ENCODE measurements at regions of chr9 and their contacts with region 1.

Region 1: DNA sequence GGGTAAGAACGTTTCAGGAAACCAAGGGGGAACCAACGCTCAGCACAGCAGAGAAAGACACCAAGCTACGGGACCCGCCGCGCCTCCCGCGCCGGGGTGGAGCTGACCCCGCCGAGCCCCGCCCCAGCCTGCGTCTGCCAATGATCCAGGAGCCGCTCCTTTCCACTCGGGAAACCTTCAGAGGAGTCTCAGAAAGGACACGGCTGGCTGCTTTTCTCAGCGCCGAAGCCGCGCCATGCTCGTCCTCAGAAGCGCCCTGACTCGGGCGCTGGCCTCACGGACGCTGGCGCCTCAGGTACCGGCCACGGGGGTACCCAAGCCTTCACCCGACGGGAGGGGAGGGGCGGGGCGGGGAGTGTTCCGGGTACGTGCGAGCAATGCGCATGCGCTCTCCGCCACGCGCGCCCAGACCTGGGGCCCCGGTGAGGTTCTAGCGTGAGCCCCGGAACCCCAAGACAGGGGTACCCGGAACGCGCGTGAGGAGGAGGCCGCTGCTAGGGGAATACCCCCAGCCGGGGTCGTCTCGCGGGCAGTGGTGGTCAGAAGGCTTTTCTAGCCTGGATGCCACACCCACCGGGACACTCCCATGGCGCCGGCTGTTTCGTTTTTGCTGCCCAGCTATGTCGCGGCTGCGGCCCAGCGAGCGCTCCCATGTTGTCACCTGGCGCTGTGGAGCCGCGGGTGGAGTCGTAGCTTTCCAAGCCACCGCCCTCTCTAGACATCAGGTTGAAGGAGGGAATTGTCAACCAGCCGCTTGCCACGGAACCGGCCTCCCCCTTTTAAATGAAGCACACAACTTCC is at the start of gene NIPSNAP3A:
- DNase-seq: peak; percentile 92
- ATAC-seq: peak; percentile 93
- H3K4me3 Mint-ChIP-seq: peak within 1 kb of the TSS; percentile 85
- H3K27ac Mint-ChIP-seq: peak within 1 kb of the TSS; percentile 96
- H3K4me1 Mint-ChIP-seq: peaks cover 16% of the 10 kb centered on the region
- H3K27me3 Mint-ChIP-seq: no peaks in the 10 kb centered on the region
- total RNA-seq, gene NIPSNAP3A: 7.2 to 11.7 TPM

Region 2: GRCh38 chr9:103798620-103799019 is 949.1 kb before region 1 on chr9:
- CTCF ChIA-PET with region 1: no interaction called
- POLR2A ChIA-PET with region 1: no interaction called
- intact Hi-C with region 1: loop called in 1 of 2 experiments (anchors 5 kb)
- DNase-seq: peak; percentile 14
- ATAC-seq: peak; percentile 98
- H3K4me3 Mint-ChIP-seq: no peak overlapping the region
- H3K27ac Mint-ChIP-seq: no peak overlapping the region
- H3K4me1 Mint-ChIP-seq: peaks cover 7% of the 10 kb centered on the region
- H3K27me3 Mint-ChIP-seq: peaks cover 4% of the 10 kb centered on the region

Region 3: DNA sequence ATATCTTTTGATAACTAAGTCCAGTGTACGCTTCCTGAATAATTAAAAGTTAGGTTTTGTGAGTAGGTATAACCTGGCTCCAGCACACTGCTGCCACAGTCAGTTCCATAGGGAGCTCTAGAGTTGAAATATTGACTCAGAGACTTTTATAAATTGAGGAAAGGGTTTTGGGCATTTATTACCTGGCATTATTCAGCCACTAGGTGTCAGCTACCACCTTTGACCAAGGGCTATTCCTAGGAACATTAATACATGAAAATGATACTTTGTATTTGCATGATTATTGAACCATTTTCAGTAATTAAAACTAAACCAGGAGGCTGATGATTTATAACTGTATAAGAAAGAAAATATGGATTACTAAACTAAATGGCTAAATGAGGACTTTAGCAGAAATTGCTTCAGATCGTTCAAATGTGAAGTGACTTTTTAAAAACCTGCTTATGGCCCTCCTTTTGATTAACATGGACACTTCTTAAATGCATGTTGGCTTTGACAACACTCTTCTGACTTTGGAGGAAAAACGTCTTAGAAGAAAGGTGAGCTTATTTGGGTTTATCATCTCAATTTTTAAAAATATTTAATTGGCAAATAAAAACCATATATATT is 570.7 kb before region 1 on chr9:
- CTCF ChIA-PET with region 1: interaction called, 3 read pairs
- POLR2A ChIA-PET with region 1: no interaction called
- intact Hi-C with region 1: loop called in 1 of 2 experiments (anchors 2 kb)
- DNase-seq: no peak
- ATAC-seq: no peak
- H3K4me3 Mint-ChIP-seq: no peak overlapping the region
- H3K27ac Mint-ChIP-seq: no peak overlapping the region
- H3K4me1 Mint-ChIP-seq: no peaks in the 10 kb centered on the region
- H3K27me3 Mint-ChIP-seq: peaks cover 2% of the 10 kb centered on the region

Region 4: DNA sequence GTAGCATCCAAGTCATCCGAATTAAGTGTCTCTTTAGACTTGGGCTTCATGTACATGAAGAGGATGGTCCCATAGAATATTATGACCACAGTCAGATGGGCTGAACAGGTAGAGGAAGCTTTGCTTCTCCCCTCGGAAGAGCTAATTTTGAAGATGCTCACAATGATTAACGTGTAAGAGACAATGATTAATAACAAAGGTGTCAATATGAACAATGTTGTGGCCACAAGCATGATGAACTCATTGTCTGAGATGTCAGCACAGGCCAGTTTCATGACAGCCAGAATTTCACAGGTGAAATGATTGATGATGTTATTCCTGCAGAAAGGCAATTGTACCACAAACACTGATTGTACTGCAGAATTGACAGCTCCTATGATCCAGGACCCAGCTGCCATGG is 143.0 kb before region 1 on chr9:
- CTCF ChIA-PET with region 1: no interaction called
- POLR2A ChIA-PET with region 1: no interaction called
- intact Hi-C with region 1: loop called in 1 of 2 experiments (anchors 5 kb)
- DNase-seq: no peak
- ATAC-seq: no peak
- H3K4me3 Mint-ChIP-seq: no peak overlapping the region
- H3K27ac Mint-ChIP-seq: no peak overlapping the region
- H3K4me1 Mint-ChIP-seq: no peaks in the 10 kb centered on the region
- H3K27me3 Mint-ChIP-seq: peaks cover 2% of the 10 kb centered on the region

Region 5: DNA sequence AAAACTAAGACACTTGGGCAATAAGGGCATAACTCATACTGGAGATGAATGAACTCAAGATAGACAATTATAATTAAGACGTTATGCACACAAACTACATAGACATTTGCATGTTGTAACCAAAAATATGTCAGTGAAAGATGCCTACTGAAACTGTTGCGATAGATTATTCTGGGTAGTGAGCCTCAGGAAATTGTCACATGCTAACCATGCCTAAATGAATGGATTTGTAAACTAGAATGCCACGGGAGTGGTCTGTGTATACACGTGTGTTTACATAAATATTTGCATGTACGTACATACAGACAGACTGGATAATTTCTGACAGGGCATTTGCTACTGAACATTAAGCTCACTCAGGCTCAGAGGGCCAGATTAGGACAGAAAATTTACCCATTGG is 17.4 kb after region 1 on chr9:
- CTCF ChIA-PET with region 1: interaction called, 8 read pairs
- POLR2A ChIA-PET with region 1: no interaction called
- intact Hi-C with region 1: loop called in 1 of 2 experiments (anchors 1 kb)
- DNase-seq: no peak
- ATAC-seq: no peak
- H3K4me3 Mint-ChIP-seq: peak overlapping the region; percentile 87
- H3K27ac Mint-ChIP-seq: no peak overlapping the region
- H3K4me1 Mint-ChIP-seq: peaks cover 4% of the 10 kb centered on the region
- H3K27me3 Mint-ChIP-seq: peaks cover 2% of the 10 kb centered on the region

Region 6: GRCh38 chr9:105053209-105053652 is 305.5 kb after region 1 on chr9:
- CTCF ChIA-PET with region 1: no interaction called
- POLR2A ChIA-PET with region 1: no interaction called
- intact Hi-C with region 1: loop called in 1 of 2 experiments (anchors 1 kb)
- DNase-seq: peak; percentile 85
- ATAC-seq: peak; percentile 95
- H3K4me3 Mint-ChIP-seq: peak overlapping the region; percentile 27
- H3K27ac Mint-ChIP-seq: peak overlapping the region; percentile 88
- H3K4me1 Mint-ChIP-seq: peaks cover 43% of the 10 kb centered on the region
- H3K27me3 Mint-ChIP-seq: no peaks in the 10 kb centered on the region

Region 7: GRCh38 chr9:105067895-105068580 is 320.3 kb after region 1 on chr9:
- CTCF ChIA-PET with region 1: no interaction called
- POLR2A ChIA-PET with region 1: no interaction called
- intact Hi-C with region 1: no loop called
- DNase-seq: no peak
- ATAC-seq: no peak
- H3K4me3 Mint-ChIP-seq: no peak overlapping the region
- H3K27ac Mint-ChIP-seq: no peak overlapping the region
- H3K4me1 Mint-ChIP-seq: peaks cover 18% of the 10 kb centered on the region
- H3K27me3 Mint-ChIP-seq: no peaks in the 10 kb centered on the region

Region 8: GRCh38 chr9:105694190-105694847 is 946.6 kb after region 1 on chr9 and contains the start of gene TMEM38B:
- CTCF ChIA-PET with region 1: no interaction called
- POLR2A ChIA-PET with region 1: no interaction called
- intact Hi-C with region 1: loop called in 1 of 2 experiments (anchors 1 kb)
- DNase-seq: peak; percentile 88
- ATAC-seq: peak; percentile 85
- H3K4me3 Mint-ChIP-seq: peak within 1 kb of the TSS; percentile 76
- H3K27ac Mint-ChIP-seq: peak within 1 kb of the TSS; percentile 86
- H3K4me1 Mint-ChIP-seq: peaks cover 27% of the 10 kb centered on the region
- H3K27me3 Mint-ChIP-seq: peaks cover 15% of the 10 kb centered on the region
- total RNA-seq, gene TMEM38B: 14.5 to 24.8 TPM

Measured in activated CD4-positive, alpha-beta T cell treated with anti-CD3 and anti-CD28 coated beads for 36 hours (primary cell).